ENCODE measurements at regions of chr17 and their contacts with region 1.

Region 1: DNA sequence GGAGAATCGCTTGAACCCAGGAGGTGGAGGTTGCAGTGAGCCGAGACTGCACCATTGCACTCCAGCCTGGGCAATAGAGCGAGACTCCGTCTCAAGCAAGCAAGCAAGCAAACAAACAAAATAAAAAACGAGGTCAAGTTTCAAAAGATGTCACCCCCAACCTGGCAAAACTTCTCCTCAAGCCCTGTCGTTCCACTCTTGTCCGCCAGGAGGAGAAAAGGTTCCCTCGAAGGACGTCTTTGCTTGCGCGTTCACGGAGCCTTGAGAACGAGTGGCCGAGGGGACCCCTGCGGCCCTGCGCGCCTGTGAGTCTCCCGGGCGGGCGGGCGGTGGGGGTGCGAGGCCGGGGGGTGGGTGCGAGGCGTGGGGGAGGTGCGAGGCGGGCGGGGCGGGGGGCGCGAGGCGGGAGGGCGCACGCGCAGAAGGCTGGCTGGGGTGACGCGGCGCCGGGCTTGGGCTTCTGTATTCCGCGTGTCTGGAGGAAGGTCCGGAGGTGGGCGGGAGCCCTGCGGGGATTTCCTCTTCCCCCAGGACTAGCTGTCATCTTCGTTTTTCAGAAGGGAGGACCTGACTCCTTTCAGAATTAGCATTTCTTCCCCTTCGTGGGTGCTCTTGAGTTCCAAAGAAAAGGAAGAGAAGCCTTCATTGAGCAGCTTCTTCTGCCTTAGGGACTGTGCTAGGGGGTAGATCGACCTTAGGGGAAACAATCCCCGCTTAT is 3.7 kb downstream of the SLC52A1 start:
- DNase-seq: peak; percentile 71
- H3K4me3 Mint-ChIP-seq: peak overlapping the region; percentile 54
- H3K27ac Mint-ChIP-seq: no peak overlapping the region
- H3K4me1 Mint-ChIP-seq: no peaks in the 10 kb centered on the region
- H3K27me3 Mint-ChIP-seq: no peaks in the 10 kb centered on the region
- CTCF ChIP-seq: peak; percentile 45

Region 2: GRCh38 chr17:5049314-5049895 is 17.9 kb after region 1 on chr17:
- CTCF ChIA-PET with region 1: interaction called, 11 read pairs
- intact Hi-C with region 1: no loop called
- DNase-seq: no peak
- H3K4me3 Mint-ChIP-seq: no peak overlapping the region
- H3K27ac Mint-ChIP-seq: no peak overlapping the region
- H3K4me1 Mint-ChIP-seq: no peaks in the 10 kb centered on the region
- H3K27me3 Mint-ChIP-seq: no peaks in the 10 kb centered on the region
- CTCF ChIP-seq: no peak